Gastrocnemius medialis (tissue), 4 donors: ENCODE measurements at regions of chr15 and their contacts with region 1.

Region 1: GRCh38 chr15:67863442-67863987 is 23.7 kb upstream of the RNU6-1 start:
- DNase-seq: peak; percentile 45 to 69
- ATAC-seq: peak; percentile 90 to 91
- H3K4me3 ChIP-seq: peak overlapping the region; percentile 53 to 79 (median 60)
- H3K27ac ChIP-seq: peak overlapping the region in 3 of 4 donors; percentile 40 to 71 (median 55)
- H3K4me1 ChIP-seq: peaks cover 5 to 9% of the 10 kb centered on the region in 2 donors
- H3K27me3 ChIP-seq: no peaks in the 10 kb centered on the region
- CTCF ChIP-seq: peak; percentile 91 to 96 (median 94)
- POLR2A ChIP-seq: no peak

Region 2: DNA sequence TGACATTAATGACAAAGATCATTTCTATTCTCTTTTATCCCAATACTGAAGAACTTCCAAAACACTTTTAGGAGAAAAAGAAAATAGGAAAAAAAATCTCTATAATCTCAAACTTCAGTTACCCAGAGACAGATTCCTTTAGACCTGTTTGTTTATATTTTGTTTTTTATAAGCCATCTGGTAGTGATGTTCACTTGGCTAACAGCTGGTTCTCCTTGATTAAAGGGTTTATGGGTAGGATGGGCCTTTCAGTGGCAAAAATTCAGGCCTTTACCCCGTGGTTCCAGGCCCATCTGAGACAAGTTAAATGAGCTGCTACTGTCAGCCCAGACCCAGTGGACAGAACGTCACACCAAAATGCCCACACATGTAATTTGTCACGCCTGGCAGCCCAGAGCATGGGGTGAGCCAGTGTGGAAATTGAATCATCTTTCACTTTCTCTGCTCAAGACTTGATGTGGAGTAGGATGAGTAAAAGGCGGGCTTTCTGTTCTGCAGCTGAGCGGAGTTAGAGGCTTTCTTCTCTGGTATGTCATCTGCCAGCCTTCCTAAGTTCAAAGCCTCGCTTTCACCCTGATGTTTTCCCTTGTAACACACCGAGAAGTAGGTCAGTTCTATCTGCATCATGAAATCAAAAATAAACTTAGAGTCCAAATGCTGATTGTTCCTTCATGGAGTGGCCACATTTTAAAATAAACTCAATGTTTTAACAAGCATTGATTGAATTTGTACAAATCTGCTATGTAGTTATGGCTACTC is 100.7 kb before region 1 on chr15:
- in situ Hi-C with region 1: no loop called
- intact Hi-C with region 1: no loop called
- DNase-seq: no peak
- ATAC-seq: peak; percentile 73 to 95
- H3K4me3 ChIP-seq: no peak overlapping the region
- H3K27ac ChIP-seq: peak overlapping the region in 3 of 4 donors; percentile 13 to 49 (median 15)
- H3K4me1 ChIP-seq: peaks cover 0 to 20% of the 10 kb centered on the region in 2 donors
- H3K27me3 ChIP-seq: no peaks in the 10 kb centered on the region
- CTCF ChIP-seq: no peak
- POLR2A ChIP-seq: no peak

Region 3: GRCh38 chr15:67803996-67804843 is 59.3 kb before region 1 on chr15:
- in situ Hi-C with region 1: no loop called
- intact Hi-C with region 1: no loop called
- DNase-seq: no peak
- ATAC-seq: no peak
- H3K4me3 ChIP-seq: no peak overlapping the region
- H3K27ac ChIP-seq: no peak overlapping the region
- H3K4me1 ChIP-seq: no peaks in the 10 kb centered on the region
- H3K27me3 ChIP-seq: no peaks in the 10 kb centered on the region
- CTCF ChIP-seq: no peak
- POLR2A ChIP-seq: no peak

Region 4: GRCh38 chr15:67839929-67840748 is 23.4 kb before region 1 on chr15 and contains the start of gene RNU6-1:
- in situ Hi-C with region 1: no loop called
- intact Hi-C with region 1: no loop called
- DNase-seq: peak; percentile 90 to 96
- ATAC-seq: peak; percentile 88 to 94
- H3K4me3 ChIP-seq: peak within 1 kb of the TSS; percentile 94 to 99 (median 96)
- H3K27ac ChIP-seq: peak within 1 kb of the TSS; percentile 97 to 100 (median 99)
- H3K4me1 ChIP-seq: peaks cover 20 to 28% of the 10 kb centered on the region in 2 donors
- H3K27me3 ChIP-seq: no peaks in the 10 kb centered on the region
- CTCF ChIP-seq: peak in 1 of 5 experiments; percentile 31
- POLR2A ChIP-seq: peak; percentile 90 to 95
- total RNA-seq, gene RNU6-1: not detected

Region 5: DNA sequence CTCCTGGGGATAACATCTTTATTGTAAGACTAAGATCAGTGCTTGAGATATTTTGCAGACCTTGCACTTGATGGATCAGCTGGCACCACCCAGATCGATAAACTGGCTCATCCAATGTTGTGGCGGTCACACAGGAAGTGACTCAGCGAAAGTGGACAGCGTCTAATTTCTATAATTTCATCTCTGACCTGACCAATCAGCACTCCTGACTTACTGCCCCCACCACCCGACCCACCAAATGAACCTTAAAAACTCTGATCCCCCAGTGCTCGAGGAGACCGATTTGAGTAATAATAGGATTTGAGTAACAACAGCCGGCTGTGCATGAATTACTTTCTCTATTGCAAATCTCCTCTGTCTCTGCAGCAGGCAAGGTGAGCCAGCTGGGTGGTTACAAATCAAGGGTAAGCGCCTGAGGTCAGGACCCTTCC is 39.1 kb after region 1 on chr15:
- in situ Hi-C with region 1: no loop called
- intact Hi-C with region 1: no loop called
- DNase-seq: no peak
- ATAC-seq: no peak
- H3K4me3 ChIP-seq: no peak overlapping the region
- H3K27ac ChIP-seq: no peak overlapping the region
- H3K4me1 ChIP-seq: peaks cover 0 to 1% of the 10 kb centered on the region in 2 donors
- H3K27me3 ChIP-seq: no peaks in the 10 kb centered on the region
- CTCF ChIP-seq: no peak
- POLR2A ChIP-seq: no peak

Region 6: GRCh38 chr15:67914537-67915460 is 51.3 kb after region 1 on chr15:
- in situ Hi-C with region 1: no loop called
- intact Hi-C with region 1: loop called (anchors 5 kb)
- DNase-seq: peak; percentile 59 to 81
- ATAC-seq: peak; percentile 60 to 67
- H3K4me3 ChIP-seq: no peak overlapping the region
- H3K27ac ChIP-seq: peak overlapping the region; percentile 79 to 95 (median 82)
- H3K4me1 ChIP-seq: peaks cover 34 to 45% of the 10 kb centered on the region in 2 donors
- H3K27me3 ChIP-seq: no peaks in the 10 kb centered on the region
- CTCF ChIP-seq: no peak
- POLR2A ChIP-seq: no peak

Region 7: DNA sequence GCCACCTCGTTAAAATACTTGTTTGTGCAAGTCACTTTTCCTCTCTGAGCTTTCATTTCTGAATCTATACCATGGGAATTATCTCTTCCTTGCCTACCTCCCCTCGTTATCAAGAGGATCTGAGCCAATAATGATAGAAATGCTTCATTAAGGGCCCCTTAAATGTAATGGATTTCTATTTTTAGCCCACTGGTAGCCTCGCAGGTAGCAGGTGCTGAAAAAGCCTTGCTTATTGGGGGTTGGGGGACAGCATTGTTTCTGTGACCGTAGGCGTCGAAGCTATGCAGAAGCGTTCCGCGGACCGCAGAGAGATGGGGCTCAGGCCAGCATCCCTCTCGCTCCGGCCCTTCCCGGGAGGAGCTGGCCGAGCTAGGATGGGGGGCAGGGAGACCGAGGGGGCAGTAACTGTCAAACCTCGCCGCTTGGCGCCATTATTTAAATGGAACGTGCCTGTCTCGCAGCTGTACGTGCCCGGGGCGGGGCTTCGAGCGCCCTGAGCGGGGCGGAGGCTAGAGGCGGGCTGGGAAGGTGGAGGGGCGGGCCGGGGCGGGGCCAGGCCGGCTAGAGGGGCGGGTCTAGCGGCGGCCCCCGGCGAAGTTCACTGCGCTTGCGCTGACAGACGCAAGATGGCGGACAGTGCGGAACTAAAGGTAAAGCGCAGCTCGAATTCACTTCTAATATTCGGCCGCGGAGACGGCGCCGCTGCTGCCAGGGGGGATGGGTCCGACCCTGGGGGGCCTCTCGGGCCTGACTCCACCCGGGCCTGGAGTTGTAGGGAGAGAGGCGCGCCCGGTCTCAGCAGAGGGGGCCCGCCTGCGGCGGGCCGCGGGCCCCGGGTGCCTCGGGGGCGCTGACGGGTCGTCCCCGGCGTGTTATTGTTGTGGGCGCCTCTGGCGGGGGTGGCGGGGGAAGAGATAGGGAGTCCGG is 190.4 kb after region 1 on chr15 and contains the start of gene PIAS1:
- in situ Hi-C with region 1: loop called in 3 of 4 experiments (anchors 25 kb)
- intact Hi-C with region 1: loop called (anchors 2 kb)
- DNase-seq: peak; percentile 88 to 93
- ATAC-seq: peak; percentile 94 to 95
- H3K4me3 ChIP-seq: peak within 1 kb of the TSS; percentile 93 to 99 (median 97)
- H3K27ac ChIP-seq: peak within 1 kb of the TSS; percentile 93 to 99 (median 96)
- H3K4me1 ChIP-seq: peaks cover 31% of the 10 kb centered on the region in 2 donors
- H3K27me3 ChIP-seq: no peaks in the 10 kb centered on the region
- CTCF ChIP-seq: no peak
- POLR2A ChIP-seq: peak; percentile 94
- total RNA-seq, gene PIAS1: 16.4 to 71.9 (median 23.5) TPM

Region 8: DNA sequence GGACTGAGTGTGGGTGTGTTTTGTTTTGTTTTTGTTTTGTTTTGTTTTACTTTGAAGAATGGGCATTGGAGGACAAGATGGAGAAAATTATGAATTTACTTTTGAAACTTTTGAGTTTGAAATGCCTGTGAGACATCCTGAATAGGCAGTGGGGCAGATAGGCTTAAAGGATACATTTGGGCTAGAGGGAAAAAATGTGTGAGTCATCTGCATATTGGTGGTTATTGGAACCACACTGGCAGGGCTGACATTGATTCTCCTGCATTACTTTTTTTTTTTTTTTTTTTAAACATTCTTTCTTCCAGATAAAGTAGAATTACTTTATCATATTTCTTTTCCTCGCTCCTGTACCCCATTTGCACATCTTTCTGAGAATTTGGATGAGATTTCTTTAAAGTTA is 285.5 kb after region 1 on chr15:
- in situ Hi-C with region 1: loop called in 3 of 4 experiments (anchors 5 to 10 kb)
- intact Hi-C with region 1: no loop called
- DNase-seq: no peak
- ATAC-seq: no peak
- H3K4me3 ChIP-seq: no peak overlapping the region
- H3K27ac ChIP-seq: no peak overlapping the region
- H3K4me1 ChIP-seq: peaks cover 0 to 10% of the 10 kb centered on the region in 2 donors
- H3K27me3 ChIP-seq: no peaks in the 10 kb centered on the region
- CTCF ChIP-seq: no peak
- POLR2A ChIP-seq: no peak

Region 9: GRCh38 chr15:68154923-68155559 is 291.5 kb after region 1 on chr15:
- in situ Hi-C with region 1: loop called in 3 of 4 experiments (anchors 5 to 10 kb)
- intact Hi-C with region 1: loop called (anchors 1 kb)
- DNase-seq: peak in 1 of 2 donors; percentile 21
- ATAC-seq: peak; percentile 49 to 60
- H3K4me3 ChIP-seq: no peak overlapping the region
- H3K27ac ChIP-seq: no peak overlapping the region
- H3K4me1 ChIP-seq: peaks cover 0 to 10% of the 10 kb centered on the region in 2 donors
- H3K27me3 ChIP-seq: no peaks in the 10 kb centered on the region
- CTCF ChIP-seq: peak; percentile 57 to 78 (median 68)
- POLR2A ChIP-seq: no peak

Region 10: GRCh38 chr15:68210821-68211655 is 347.5 kb after region 1 on chr15:
- in situ Hi-C with region 1: loop called in 1 of 4 experiments (anchors 10 kb)
- intact Hi-C with region 1: loop called (anchors 1 kb)
- DNase-seq: peak in 1 of 2 donors; percentile 48
- ATAC-seq: peak; percentile 35 to 70
- H3K4me3 ChIP-seq: peak overlapping the region in 1 of 4 donors; percentile 6
- H3K27ac ChIP-seq: no peak overlapping the region
- H3K4me1 ChIP-seq: peaks cover 4 to 5% of the 10 kb centered on the region in 2 donors
- H3K27me3 ChIP-seq: no peaks in the 10 kb centered on the region
- CTCF ChIP-seq: peak; percentile 75 to 94 (median 86)
- POLR2A ChIP-seq: no peak